Activated CD4-positive, alpha-beta T cell treated with anti-CD3 and anti-CD28 coated beads, Interleukin-2, amount 10 ng/mL, durations not matched to agents 24 days and 14 days (primary cell): ENCODE measurements at regions of chr16 and their contacts with region 1.

Region 1: DNA sequence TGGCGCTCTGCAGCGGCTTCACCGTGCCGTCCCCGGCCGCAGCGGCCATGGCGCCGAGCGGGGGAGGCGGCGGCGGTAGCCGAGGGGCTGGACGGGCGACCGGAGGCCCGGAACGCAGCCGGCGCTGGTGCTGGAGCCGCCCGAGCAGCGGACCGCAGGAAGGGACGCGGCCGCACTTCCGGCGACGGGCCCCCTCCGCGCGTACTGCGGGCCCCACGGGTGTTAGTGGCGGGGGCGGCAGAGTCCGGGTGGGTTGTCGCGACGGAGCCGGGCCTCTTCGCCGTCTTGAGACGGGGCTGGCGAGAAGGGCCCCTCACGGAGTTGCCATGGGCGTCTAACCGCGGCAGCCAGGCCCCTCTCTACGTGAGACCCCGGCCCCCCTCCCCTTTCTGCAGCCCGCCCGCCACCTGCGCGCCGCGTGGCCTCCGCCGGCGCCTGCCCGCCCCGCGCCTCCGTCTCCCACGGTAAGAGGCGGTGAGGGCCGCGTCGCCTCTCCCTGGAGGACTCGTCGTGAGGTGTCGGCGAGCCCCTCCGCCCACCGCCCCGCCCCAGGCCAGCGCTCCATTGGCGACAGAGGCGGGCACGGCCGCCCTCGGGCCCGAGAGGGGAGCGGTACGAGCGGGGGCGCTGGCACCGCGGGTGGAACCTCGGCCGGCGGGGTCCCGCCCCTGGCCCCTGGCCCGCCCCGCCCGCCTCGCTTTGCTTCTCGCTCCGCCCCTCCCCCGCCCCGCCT is at the starts of genes VPS9D1 and ZNF276:
- DNase-seq: peak; percentile 94
- H3K4me3 Mint-ChIP-seq: peak within 1 kb of the TSS; percentile 90
- H3K27ac Mint-ChIP-seq: peak within 1 kb of the TSS; percentile 92
- H3K4me1 Mint-ChIP-seq: peaks cover 37% of the 10 kb centered on the region
- H3K27me3 Mint-ChIP-seq: no peaks in the 10 kb centered on the region
- total RNA-seq, gene VPS9D1: 3.6 and 3.9 TPM in 2 replicates
- total RNA-seq, gene ZNF276: 32.9 and 33.3 TPM in 2 replicates

Region 2: GRCh38 chr16:89246903-89247733 is 473.9 kb before region 1 on chr16:
- intact Hi-C with region 1: loop called (anchors 5 kb)
- DNase-seq: peak; percentile 97
- H3K4me3 Mint-ChIP-seq: peak overlapping the region; percentile 76
- H3K27ac Mint-ChIP-seq: no peak overlapping the region
- H3K4me1 Mint-ChIP-seq: peaks cover 6% of the 10 kb centered on the region
- H3K27me3 Mint-ChIP-seq: peaks cover 4% of the 10 kb centered on the region

Region 3: GRCh38 chr16:89476804-89477261 is 244.1 kb before region 1 on chr16:
- intact Hi-C with region 1: no loop called
- DNase-seq: no peak
- H3K4me3 Mint-ChIP-seq: peak overlapping the region; percentile 13
- H3K27ac Mint-ChIP-seq: peak overlapping the region; percentile 51
- H3K4me1 Mint-ChIP-seq: peaks cover 63% of the 10 kb centered on the region
- H3K27me3 Mint-ChIP-seq: no peaks in the 10 kb centered on the region

Region 4: DNA sequence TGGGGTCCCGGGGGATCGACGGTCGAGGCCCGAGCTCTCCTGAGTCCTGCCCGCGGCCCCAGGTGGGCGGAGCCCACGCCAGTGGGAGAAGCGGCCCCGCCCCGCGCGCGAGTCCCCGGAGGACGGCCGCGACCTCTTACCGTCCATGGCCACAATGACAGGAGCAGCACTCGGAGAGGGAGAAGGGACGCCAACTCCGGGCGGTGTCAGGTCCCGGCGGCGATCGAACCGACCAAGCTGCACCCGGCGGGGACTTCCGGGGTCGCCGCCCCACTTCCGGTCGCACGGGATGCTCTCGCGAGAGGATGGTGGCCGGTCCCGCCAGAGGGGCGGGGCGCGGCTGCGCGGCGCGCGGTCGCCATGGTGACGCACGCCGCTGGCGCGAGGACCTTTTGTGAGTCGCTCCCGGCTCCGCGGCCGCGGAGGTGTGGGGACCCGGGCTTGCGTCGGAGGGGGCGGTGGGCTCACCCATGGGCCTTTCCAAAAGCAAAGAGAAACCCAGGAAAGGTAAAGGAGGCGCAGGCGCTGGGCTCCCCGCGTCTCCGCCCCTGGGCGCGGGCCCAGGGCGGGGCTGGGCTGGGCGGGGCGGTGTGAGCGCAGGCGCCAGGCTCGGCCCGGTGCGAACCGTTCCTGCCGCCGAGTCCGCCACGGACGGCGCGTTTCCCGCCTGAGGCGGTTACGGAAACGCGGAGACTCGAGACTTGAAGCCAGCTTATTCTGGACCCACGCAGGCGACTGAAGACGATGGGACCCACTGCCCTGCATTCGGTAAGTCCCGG is 63.3 kb before region 1 on chr16 and contains the starts of genes CHMP1A and SPATA33:
- intact Hi-C with region 1: no loop called
- DNase-seq: peak; percentile 98
- H3K4me3 Mint-ChIP-seq: peak within 1 kb of the TSS; percentile 97
- H3K27ac Mint-ChIP-seq: peak within 1 kb of the TSS; percentile 92
- H3K4me1 Mint-ChIP-seq: peaks cover 33% of the 10 kb centered on the region
- H3K27me3 Mint-ChIP-seq: no peaks in the 10 kb centered on the region
- total RNA-seq, gene CHMP1A: 83.7 and 84.3 TPM in 2 replicates
- total RNA-seq, gene SPATA33: 14.6 and 17.2 TPM in 2 replicates

Region 5: GRCh38 chr16:89670496-89671431 is 50.2 kb before region 1 on chr16:
- intact Hi-C with region 1: no loop called
- DNase-seq: no peak
- H3K4me3 Mint-ChIP-seq: no peak overlapping the region
- H3K27ac Mint-ChIP-seq: no peak overlapping the region
- H3K4me1 Mint-ChIP-seq: peaks cover 12% of the 10 kb centered on the region
- H3K27me3 Mint-ChIP-seq: no peaks in the 10 kb centered on the region

Region 6: GRCh38 chr16:89737341-89738071 is 16.5 kb after region 1 on chr16:
- intact Hi-C with region 1: loop called (anchors 1 kb)
- DNase-seq: peak; percentile 85
- H3K4me3 Mint-ChIP-seq: peak overlapping the region; percentile 32
- H3K27ac Mint-ChIP-seq: peak overlapping the region; percentile 70
- H3K4me1 Mint-ChIP-seq: peaks cover 20% of the 10 kb centered on the region
- H3K27me3 Mint-ChIP-seq: no peaks in the 10 kb centered on the region

Region 7: GRCh38 chr16:89749647-89750046 is 28.7 kb after region 1 on chr16:
- intact Hi-C with region 1: no loop called
- DNase-seq: no peak
- H3K4me3 Mint-ChIP-seq: no peak overlapping the region
- H3K27ac Mint-ChIP-seq: no peak overlapping the region
- H3K4me1 Mint-ChIP-seq: peaks cover 4% of the 10 kb centered on the region
- H3K27me3 Mint-ChIP-seq: no peaks in the 10 kb centered on the region